ENCODE measurements at regions of chr12 and their contacts with region 1.

Region 1: DNA sequence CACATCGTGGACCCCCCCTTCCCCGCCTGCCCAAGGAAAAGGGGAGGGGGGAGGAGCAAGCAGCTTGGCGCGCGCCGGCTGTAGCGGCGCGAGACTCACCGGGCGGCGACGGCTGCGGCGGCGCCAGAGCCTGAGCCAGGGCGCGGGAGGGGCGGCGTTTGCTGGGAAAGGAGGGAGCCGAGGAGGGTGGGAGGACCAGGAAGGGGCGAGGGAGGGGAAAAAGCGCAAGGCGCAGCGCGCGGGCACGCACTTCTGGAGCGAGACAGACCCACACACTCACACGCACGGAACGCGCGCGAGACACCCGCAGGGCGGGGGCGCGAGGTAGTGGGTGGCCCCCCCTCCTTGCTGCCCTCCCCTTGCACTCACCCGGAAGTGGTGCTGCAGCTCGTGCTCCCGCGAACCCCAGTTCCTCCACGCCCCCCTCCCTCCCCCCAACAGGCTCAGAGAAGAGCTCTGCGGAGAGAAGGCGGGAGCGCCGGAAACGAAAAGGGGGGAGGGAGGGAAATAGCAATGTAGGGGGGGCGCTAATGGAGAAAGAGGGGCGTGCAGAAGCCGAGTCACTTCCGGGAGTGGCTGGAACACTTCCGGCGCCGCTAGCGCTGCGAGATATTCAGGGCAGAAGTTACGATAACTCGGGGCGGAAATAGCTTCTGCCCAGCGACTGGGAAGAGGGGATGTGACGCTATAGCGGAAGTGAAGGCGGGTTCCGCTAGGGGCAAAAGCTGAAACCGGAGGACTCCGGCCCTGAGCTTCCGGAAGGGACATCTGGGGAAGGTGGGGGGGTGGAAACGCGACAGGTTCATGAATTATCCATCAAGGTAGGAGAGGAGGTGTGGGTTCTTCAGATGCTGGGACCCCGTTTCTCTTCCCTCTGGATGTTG is at the start of gene ZNF384:
- DNase-seq: peak; percentile 85 to 98 (median 96)
- ATAC-seq: peak; percentile 78 to 83
- H3K4me3 Mint-ChIP-seq: peak within 1 kb of the TSS; percentile 81 to 97 (median 92)
- H3K27ac Mint-ChIP-seq: peak within 1 kb of the TSS; percentile 89 to 99 (median 96)
- H3K4me1 Mint-ChIP-seq: peaks cover 36 to 67% (median 58%) of the 10 kb centered on the region in 4 donors
- H3K27me3 Mint-ChIP-seq: no peaks in the 10 kb centered on the region
- polyA plus RNA-seq, gene ZNF384: 17.6 to 39.6 (median 26.3) TPM

Region 2: GRCh38 chr12:6567112-6567670 is 122.0 kb before region 1 on chr12:
- POLR2A ChIA-PET with region 1: interaction called, 18 read pairs
- DNase-seq: no peak
- ATAC-seq: no peak
- H3K4me3 Mint-ChIP-seq: peak overlapping the region; percentile 95 to 100 (median 100)
- H3K27ac Mint-ChIP-seq: peak overlapping the region; percentile 95 to 100 (median 99)
- H3K4me1 Mint-ChIP-seq: peaks cover 29 to 56% (median 48%) of the 10 kb centered on the region in 4 donors
- H3K27me3 Mint-ChIP-seq: no peaks in the 10 kb centered on the region

Region 3: GRCh38 chr12:6620137-6620884 is 68.9 kb before region 1 on chr12:
- POLR2A ChIA-PET with region 1: interaction called, 21 read pairs
- DNase-seq: peak in 9 of 10 donors; percentile 22 to 76 (median 57)
- ATAC-seq: peak; percentile 72 to 80
- H3K4me3 Mint-ChIP-seq: peak overlapping the region in 9 of 10 donors; percentile 33 to 76 (median 53)
- H3K27ac Mint-ChIP-seq: peak overlapping the region in 9 of 10 donors; percentile 37 to 94 (median 89)
- H3K4me1 Mint-ChIP-seq: peaks cover 22 to 54% (median 43%) of the 10 kb centered on the region in 4 donors
- H3K27me3 Mint-ChIP-seq: no peaks in the 10 kb centered on the region

Region 4: DNA sequence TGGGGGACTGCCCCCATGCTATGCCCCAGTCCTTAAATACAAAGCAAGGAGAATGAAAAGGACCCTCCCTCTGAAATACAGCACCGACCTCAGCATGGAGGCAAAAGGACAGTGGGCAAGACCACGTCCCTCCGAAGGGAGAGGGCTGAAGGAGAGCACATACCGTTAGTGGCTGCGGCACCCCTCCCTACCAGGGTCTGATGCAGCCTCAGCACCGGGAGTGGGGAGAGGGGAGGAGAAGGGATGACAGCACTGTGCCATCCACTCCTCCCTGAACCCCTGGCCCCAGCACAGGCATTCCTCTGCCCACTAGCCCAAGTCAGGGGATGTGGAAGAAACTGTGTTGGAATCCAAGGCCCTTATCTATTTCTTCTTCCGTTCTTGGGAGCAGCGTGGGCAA is 38.4 kb before region 1 on chr12:
- POLR2A ChIA-PET with region 1: no interaction called
- DNase-seq: no peak
- ATAC-seq: no peak
- H3K4me3 Mint-ChIP-seq: no peak overlapping the region
- H3K27ac Mint-ChIP-seq: peak overlapping the region in 1 of 10 donors; percentile 20
- H3K4me1 Mint-ChIP-seq: peaks cover 8 to 21% (median 12%) of the 10 kb centered on the region in 4 donors
- H3K27me3 Mint-ChIP-seq: no peaks in the 10 kb centered on the region

Region 5: GRCh38 chr12:6708960-6709394 is 19.7 kb after region 1 on chr12:
- POLR2A ChIA-PET with region 1: interaction called, 21 read pairs
- DNase-seq: peak in 7 of 10 donors; percentile 23 to 74 (median 56)
- ATAC-seq: peak; percentile 65 to 90
- H3K4me3 Mint-ChIP-seq: peak overlapping the region; percentile 78 to 97 (median 89)
- H3K27ac Mint-ChIP-seq: peak overlapping the region; percentile 53 to 97 (median 92)
- H3K4me1 Mint-ChIP-seq: peaks cover 6 to 13% (median 10%) of the 10 kb centered on the region in 4 donors
- H3K27me3 Mint-ChIP-seq: peaks cover 10 to 28% (median 17%) of the 10 kb centered on the region in 5 donors

Region 6: GRCh38 chr12:6851921-6852650 is 162.8 kb after region 1 on chr12 and contains the start of gene USP5:
- POLR2A ChIA-PET with region 1: interaction called, 25 read pairs
- DNase-seq: peak; percentile 95 to 99 (median 99)
- ATAC-seq: peak; percentile 76 to 80
- H3K4me3 Mint-ChIP-seq: peak within 1 kb of the TSS; percentile 86 to 100 (median 96)
- H3K27ac Mint-ChIP-seq: peak within 1 kb of the TSS; percentile 91 to 100 (median 99)
- H3K4me1 Mint-ChIP-seq: peaks cover 20 to 33% (median 25%) of the 10 kb centered on the region in 4 donors
- H3K27me3 Mint-ChIP-seq: no peaks in the 10 kb centered on the region
- polyA plus RNA-seq, gene USP5: 55.3 to 69.2 (median 56.7) TPM

Region 7: GRCh38 chr12:6965026-6965661 is 275.9 kb after region 1 on chr12:
- POLR2A ChIA-PET with region 1: interaction called, 10 read pairs
- DNase-seq: peak; percentile 77 to 93 (median 86)
- ATAC-seq: peak; percentile 46 to 61
- H3K4me3 Mint-ChIP-seq: peak overlapping the region in 4 of 10 donors; percentile 15 to 48 (median 30)
- H3K27ac Mint-ChIP-seq: peak overlapping the region; percentile 79 to 95 (median 90)
- H3K4me1 Mint-ChIP-seq: peaks cover 31 to 64% (median 62%) of the 10 kb centered on the region in 4 donors
- H3K27me3 Mint-ChIP-seq: no peaks in the 10 kb centered on the region

Measured in naive thymus-derived CD8-positive, alpha-beta T cell (primary cell).